Esophagus muscularis mucosa (tissue), 4 donors: ENCODE measurements at regions of chr6 and their contacts with region 1.

Region 1: GRCh38 chr6:79564636-79565035 is 27.4 kb upstream of the LCA5 start:
- DNase-seq: no peak
- H3K4me3 ChIP-seq: no peak overlapping the region
- H3K27ac ChIP-seq: no peak overlapping the region
- H3K4me1 ChIP-seq: no peaks in the 10 kb centered on the region
- H3K27me3 ChIP-seq: no peaks in the 10 kb centered on the region
- CTCF ChIP-seq: no peak
- EP300 ChIP-seq: no peak
- POLR2A ChIP-seq: no peak

Region 2: DNA sequence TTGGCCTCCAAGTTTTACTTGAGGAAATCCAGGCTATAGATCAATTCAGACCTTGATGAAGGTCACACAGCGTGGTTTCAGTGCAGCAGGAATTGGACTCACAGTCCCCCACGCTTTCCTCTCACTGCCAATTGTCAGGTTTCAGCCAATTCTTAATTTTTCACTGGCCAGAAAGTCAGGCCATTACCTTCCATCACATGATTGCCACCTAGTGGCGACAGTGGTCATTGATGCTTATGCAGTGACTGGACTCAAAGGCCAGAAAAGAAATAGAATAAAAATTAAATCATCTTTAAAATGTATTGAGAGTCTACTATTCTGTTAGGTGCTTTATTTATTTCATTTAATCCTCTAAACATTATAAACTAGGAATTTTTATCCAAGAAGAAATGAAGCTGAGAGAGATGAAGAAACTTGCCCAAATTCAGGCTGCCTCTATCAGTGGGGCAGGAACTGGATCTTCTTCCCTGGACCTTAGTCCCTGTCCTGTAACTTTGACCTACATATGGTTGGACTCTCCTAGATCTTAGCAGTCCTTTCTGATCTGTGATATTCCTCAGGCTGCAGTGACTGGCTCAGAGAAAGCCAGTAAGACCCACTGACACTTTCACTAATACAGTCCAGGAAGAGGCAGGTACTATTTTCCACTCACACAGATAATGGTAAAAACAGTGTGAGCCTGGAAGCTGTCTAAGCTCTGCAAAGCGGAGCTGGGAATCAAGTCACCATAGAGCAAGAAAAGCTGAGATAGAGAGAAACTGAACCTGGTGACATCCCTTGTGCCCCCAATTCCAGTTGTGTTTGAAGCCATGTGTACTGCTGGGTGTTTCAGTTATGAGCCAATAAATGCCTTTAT is 249.4 kb after region 1 on chr6:
- intact Hi-C with region 1: loop called (anchors 5 kb)
- DNase-seq: no peak
- H3K4me3 ChIP-seq: no peak overlapping the region
- H3K27ac ChIP-seq: no peak overlapping the region
- H3K4me1 ChIP-seq: peaks cover 0 to 20% (median 10%) of the 10 kb centered on the region in 4 donors
- H3K27me3 ChIP-seq: no peaks in the 10 kb centered on the region
- CTCF ChIP-seq: peak; percentile 75 to 90 (median 85)
- EP300 ChIP-seq: no peak
- POLR2A ChIP-seq: no peak

Region 3: DNA sequence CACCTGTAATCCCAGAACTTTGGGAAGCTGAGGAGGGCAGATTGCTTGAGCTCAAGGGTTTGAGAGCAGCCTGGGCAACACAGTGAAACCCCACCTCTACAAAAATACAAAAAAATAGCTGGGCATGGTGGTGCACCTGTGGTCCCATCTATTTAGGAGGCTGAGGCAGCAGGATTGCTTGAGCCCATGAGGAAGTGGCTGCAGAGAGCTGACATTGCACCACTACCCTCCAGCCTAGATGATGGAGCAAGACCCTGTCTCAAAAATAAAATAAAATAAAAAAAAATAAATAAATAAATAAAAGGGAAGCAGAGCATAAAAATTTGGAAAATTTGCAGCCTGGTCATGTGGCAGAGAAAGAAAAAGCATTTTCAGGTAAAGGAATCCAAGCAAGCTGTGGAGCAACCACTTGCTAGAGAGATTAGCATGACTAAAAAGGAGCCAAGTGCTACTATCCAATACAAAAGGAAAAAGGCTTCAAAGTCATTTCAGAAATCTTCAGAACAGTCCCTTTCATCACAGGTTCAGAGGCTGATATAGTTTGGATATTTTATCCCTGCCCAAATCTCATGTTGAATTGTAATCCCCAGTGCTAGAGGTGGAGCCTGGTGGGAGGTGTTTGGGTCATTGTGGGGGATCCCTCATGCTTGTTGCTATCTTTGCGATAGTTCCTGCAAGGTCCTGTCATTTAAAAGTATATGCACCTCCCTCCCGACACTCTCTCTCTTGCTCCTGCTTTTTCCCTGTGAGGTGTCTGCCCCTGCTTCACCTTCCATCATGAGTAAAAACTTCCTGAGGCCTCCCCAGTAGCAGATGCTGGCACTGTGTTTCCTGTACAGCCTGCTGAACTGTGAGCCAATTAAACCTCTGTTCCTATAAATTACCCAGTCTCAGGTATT is 428.6 kb after region 1 on chr6:
- intact Hi-C with region 1: no loop called
- DNase-seq: no peak
- H3K4me3 ChIP-seq: no peak overlapping the region
- H3K27ac ChIP-seq: no peak overlapping the region
- H3K4me1 ChIP-seq: no peaks in the 10 kb centered on the region
- H3K27me3 ChIP-seq: no peaks in the 10 kb centered on the region
- CTCF ChIP-seq: no peak
- EP300 ChIP-seq: no peak
- POLR2A ChIP-seq: no peak